Activated T-helper 2 cell treated with anti-CD3 and anti-CD28 coated beads, Interferon-gamma antibody, Interleukin-2, Interleukin-4, amounts not matched to agents 10 μg/mL and 5 μg/mL and 100 μg/mL, durations not matched to agents 14 hours and 24 hours and 36 hours (primary cell): ENCODE measurements at regions of chr6 and their contacts with region 1.

Region 1: DNA sequence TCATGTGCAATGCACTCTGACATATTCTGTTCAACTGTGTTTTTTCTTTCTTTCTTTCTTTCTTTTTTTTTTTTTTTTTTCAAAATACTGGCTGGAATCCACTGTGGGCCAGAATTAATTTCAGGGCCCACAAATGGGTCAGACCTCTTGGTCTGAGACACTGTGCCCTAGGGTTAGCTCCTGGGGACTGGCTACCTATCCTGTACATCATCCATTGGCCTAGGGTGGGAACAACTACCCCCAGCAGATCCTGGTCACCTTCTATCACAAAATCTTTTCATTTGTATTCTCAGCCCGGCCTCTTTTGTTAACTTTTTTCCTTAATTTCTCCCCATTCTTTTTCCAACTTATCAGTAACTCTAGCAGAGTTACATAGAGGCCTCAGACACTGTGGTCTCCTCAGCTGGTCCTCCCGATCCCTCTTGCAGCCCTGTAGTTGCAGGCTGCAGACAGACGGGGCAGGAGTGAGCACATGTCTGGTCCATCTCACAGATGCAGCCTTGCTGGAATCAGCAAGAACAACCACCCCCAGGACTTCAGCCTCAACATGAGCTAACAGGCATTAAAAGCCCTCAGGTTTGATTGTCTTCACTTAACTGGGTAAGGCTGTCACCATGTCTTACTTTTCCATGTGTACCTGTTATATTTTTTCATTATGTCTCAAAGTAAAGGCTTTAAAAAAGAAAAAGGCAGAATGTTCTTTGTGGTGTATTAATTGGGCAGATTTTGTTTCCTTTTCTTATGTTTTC is 41.3 kb downstream of the TXLNB start:
- DNase-seq: peak; percentile 56
- H3K4me3 Mint-ChIP-seq: peak overlapping the region; percentile 48
- H3K27ac Mint-ChIP-seq: peak overlapping the region; percentile 70
- H3K4me1 Mint-ChIP-seq: peaks cover 37% of the 10 kb centered on the region
- H3K27me3 Mint-ChIP-seq: no peaks in the 10 kb centered on the region

Region 2: GRCh38 chr6:139219271-139219729 is 31.2 kb before region 1 on chr6:
- intact Hi-C with region 1: loop called (anchors 2 kb)
- DNase-seq: peak; percentile 55
- H3K4me3 Mint-ChIP-seq: no peak overlapping the region
- H3K27ac Mint-ChIP-seq: no peak overlapping the region
- H3K4me1 Mint-ChIP-seq: peaks cover 9% of the 10 kb centered on the region
- H3K27me3 Mint-ChIP-seq: peaks cover 3% of the 10 kb centered on the region

Region 3: DNA sequence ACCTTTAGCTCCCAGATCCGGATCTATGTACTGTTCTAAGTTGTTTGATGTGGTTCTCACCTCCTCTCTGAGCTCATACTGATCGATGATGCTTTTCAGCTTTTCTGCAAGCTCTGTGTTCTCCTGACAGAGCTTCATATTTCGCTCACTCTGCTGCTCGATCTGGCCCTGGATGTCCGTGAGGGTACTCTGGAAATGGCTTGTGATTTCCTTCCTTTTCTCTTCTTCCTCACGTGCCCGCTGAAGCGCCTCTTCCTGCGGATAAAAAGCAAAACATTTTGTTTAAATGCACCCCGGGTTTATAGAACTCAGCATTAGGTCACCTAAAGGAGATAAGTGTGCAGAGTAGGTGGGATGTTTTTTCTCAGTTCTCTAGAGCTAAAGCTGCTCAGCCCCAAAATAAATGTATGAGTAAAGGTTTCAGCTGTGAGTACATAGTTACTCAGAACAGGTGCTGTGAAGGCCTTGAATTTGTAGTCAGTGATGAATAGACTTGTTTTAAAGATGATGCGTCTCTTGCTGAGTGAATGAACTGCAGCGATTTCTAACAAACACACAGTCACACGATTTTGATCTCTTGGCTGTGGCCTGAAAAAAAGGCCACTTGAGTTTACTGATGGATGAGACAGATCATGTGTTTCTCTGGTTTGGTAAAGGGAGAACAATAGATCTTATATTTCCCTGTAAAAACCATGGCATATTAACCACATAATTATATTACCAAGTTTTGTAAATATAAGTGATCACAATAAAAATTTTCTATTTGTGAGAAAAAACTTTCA is 12.2 kb after region 1 on chr6:
- intact Hi-C with region 1: loop called (anchors 1 kb)
- DNase-seq: no peak
- H3K4me3 Mint-ChIP-seq: peak overlapping the region; percentile 69
- H3K27ac Mint-ChIP-seq: peak overlapping the region; percentile 85
- H3K4me1 Mint-ChIP-seq: peaks cover 17% of the 10 kb centered on the region
- H3K27me3 Mint-ChIP-seq: no peaks in the 10 kb centered on the region

Region 4: GRCh38 chr6:139278190-139278589 is 27.7 kb after region 1 on chr6:
- intact Hi-C with region 1: loop called (anchors 1 kb)
- DNase-seq: no peak
- H3K4me3 Mint-ChIP-seq: no peak overlapping the region
- H3K27ac Mint-ChIP-seq: no peak overlapping the region
- H3K4me1 Mint-ChIP-seq: peaks cover 26% of the 10 kb centered on the region
- H3K27me3 Mint-ChIP-seq: no peaks in the 10 kb centered on the region